ENCODE measurements at regions of chr22 and their contacts with region 1.

Region 1: GRCh38 chr22:32660292-32660691 is 141.2 kb upstream of the TIMP3 start:
- DNase-seq: peak; percentile 79 to 82 (median 80)
- H3K4me3 ChIP-seq: no peak overlapping the region
- H3K27ac ChIP-seq: no peak overlapping the region
- H3K4me1 ChIP-seq: peaks cover 0 to 9% (median 3%) of the 10 kb centered on the region in 4 experiments
- H3K27me3 ChIP-seq: no peaks in the 10 kb centered on the region

Region 2: GRCh38 chr22:32528984-32529982 is 131.0 kb before region 1 on chr22:
- CTCF ChIA-PET with region 1: interaction called, 11 read pairs
- POLR2A ChIA-PET with region 1: no interaction called
- DNase-seq: peak; percentile 83 to 92 (median 89)
- H3K4me3 ChIP-seq: no peak overlapping the region
- H3K27ac ChIP-seq: no peak overlapping the region
- H3K4me1 ChIP-seq: peaks cover 0 to 4% (median 3%) of the 10 kb centered on the region in 4 experiments
- H3K27me3 ChIP-seq: peaks cover 0 to 3% (median 0%) of the 10 kb centered on the region in 5 experiments

Region 3: DNA sequence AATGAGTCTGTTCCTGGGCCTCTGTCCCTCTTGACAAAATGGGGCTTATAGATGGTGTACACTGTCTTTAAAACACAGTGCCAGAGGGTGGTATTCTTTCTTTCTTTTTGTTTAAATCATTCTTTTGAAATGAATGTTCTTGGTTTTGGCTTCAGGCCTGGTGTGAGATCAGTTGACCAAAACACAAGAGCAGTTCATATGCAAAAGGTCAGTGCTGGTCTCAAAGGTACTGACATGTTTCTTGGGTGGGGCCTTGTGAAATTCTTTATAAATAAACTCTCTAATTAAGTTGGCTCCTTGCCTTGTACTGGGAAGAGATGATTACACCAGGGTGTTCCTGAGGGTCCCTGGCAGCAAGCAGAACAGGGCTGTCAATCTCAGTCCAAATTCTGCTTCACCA is 75.6 kb before region 1 on chr22:
- CTCF ChIA-PET with region 1: no interaction called
- POLR2A ChIA-PET with region 1: no interaction called
- DNase-seq: no peak
- H3K4me3 ChIP-seq: no peak overlapping the region
- H3K27ac ChIP-seq: no peak overlapping the region
- H3K4me1 ChIP-seq: no peaks in the 10 kb centered on the region
- H3K27me3 ChIP-seq: no peaks in the 10 kb centered on the region

Region 4: DNA sequence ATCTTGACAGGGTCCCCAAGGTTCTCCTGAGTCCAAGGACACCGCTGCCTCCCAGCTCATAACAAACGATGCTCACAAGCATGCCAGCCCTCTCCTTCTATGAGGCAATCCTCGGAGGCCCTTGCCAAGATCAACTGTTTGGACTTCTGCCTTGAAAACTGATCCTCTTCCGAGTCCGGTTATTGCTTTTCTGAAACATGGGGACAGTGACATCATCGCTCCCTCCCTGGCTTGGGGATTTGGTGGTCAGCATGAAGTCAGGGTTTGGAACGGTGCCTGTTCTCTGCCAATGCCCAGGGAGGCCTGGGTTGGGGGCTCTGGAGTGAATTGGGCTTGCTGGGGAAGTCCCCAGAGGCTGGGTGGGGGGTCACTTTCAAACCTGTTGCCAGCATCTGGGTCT is 36.3 kb before region 1 on chr22:
- CTCF ChIA-PET with region 1: interaction called, 36 read pairs
- POLR2A ChIA-PET with region 1: no interaction called
- DNase-seq: no peak
- H3K4me3 ChIP-seq: no peak overlapping the region
- H3K27ac ChIP-seq: no peak overlapping the region
- H3K4me1 ChIP-seq: peaks cover 15 to 40% (median 29%) of the 10 kb centered on the region in 4 experiments
- H3K27me3 ChIP-seq: no peaks in the 10 kb centered on the region

Region 5: GRCh38 chr22:32649515-32650200 is 10.6 kb before region 1 on chr22:
- CTCF ChIA-PET with region 1: interaction called, 18 read pairs
- POLR2A ChIA-PET with region 1: no interaction called
- DNase-seq: peak; percentile 88 to 97 (median 96)
- H3K4me3 ChIP-seq: no peak overlapping the region
- H3K27ac ChIP-seq: no peak overlapping the region
- H3K4me1 ChIP-seq: peaks cover 3 to 42% (median 18%) of the 10 kb centered on the region in 4 experiments
- H3K27me3 ChIP-seq: no peaks in the 10 kb centered on the region

Region 6: GRCh38 chr22:32985899-32986765 is 325.8 kb after region 1 on chr22:
- CTCF ChIA-PET with region 1: interaction called, 29 read pairs
- POLR2A ChIA-PET with region 1: no interaction called
- DNase-seq: peak; percentile 73 to 83 (median 79)
- H3K4me3 ChIP-seq: no peak overlapping the region
- H3K27ac ChIP-seq: no peak overlapping the region
- H3K4me1 ChIP-seq: peaks cover 0 to 6% (median 0%) of the 10 kb centered on the region in 4 experiments
- H3K27me3 ChIP-seq: no peaks in the 10 kb centered on the region

Region 7: DNA sequence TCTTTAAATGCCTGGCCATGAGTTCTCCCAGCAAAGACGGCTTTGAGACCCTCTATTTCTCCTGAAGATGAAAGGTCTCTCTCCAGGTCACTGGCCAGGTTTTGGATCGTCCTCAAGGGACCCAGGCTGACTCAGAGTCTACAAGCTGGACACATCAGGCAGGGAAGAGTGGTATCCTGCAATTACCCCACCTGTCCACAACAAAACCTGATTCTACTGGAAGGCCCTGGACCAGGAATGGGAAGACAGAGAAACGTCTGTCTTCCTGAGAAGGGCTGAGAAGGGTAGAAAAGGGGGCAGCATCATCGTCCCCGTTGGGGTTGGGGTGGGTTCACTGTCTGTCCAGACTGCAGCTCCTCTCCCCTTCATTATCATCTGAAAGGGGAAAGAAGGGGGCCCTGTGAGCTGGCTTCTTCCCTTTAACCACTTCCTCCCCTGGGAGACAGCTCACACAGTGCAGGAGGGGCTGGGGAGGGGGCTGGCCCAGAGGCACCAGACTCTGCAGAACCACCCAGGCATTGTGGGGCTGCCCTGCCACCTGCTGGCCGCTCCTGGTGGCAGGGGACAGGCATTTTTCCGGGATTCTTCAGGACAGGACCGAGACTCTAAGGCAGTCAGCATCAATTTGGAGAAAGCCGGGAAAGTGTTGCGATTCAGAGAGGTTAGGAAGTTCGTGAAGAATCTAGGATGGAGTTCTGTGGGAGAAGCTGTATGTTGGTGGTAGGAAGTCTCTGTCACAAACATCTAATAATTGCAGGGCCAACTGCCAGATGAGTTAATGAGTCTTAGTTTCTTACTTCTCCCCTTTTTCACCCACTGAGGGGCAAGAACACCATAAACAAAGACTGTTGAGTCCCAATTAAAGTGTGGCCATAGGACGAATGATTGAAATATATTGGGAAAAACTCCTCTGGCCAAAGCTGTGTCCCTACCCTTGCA is 340.3 kb after region 1 on chr22:
- CTCF ChIA-PET with region 1: interaction called, 26 read pairs
- POLR2A ChIA-PET with region 1: no interaction called
- DNase-seq: peak; percentile 46 to 67 (median 63)
- H3K4me3 ChIP-seq: no peak overlapping the region
- H3K27ac ChIP-seq: no peak overlapping the region
- H3K4me1 ChIP-seq: peaks cover 0 to 7% (median 5%) of the 10 kb centered on the region in 4 experiments
- H3K27me3 ChIP-seq: no peaks in the 10 kb centered on the region